AG04449 (cell line): ENCODE measurements at regions of chr12 and their contacts with region 1.

Region 1: DNA sequence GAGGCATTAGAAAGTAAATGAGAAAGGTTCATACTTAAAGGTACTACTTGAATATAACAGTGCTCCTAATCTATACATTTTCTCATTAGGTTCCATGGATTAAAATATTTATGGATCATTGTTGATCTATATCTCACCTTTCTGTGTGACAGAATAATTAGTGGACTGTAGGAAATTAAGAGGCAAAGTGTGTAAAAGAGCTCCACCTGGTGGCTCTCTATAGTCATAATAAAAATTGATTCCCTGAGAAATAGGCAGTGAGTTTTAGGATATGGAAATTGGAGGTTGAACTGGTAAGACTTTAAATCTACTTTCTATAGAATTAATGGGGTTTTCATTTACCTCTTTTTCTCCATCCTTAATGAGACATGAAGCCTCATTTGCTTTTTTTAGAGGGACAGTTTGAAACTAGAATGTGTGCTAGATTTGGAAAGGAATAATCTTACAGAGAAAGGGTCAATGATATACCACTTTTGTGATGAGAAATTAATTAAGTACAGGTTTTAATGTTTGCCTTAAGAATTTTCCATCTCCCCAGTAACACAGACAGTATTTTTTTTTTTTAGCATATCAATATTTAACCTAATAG is 11.8 kb upstream of the DERA start:
- DNase-seq: no peak
- H3K4me3 ChIP-seq: no peak overlapping the region
- CTCF ChIP-seq: peak; percentile 33

Region 2: GRCh38 chr12:15669256-15669948 is 230.0 kb before region 1 on chr12:
- CTCF ChIA-PET with region 1: no interaction called
- POLR2A ChIA-PET with region 1: no interaction called
- DNase-seq: no peak
- H3K4me3 ChIP-seq: no peak overlapping the region
- CTCF ChIP-seq: no peak

Region 3: DNA sequence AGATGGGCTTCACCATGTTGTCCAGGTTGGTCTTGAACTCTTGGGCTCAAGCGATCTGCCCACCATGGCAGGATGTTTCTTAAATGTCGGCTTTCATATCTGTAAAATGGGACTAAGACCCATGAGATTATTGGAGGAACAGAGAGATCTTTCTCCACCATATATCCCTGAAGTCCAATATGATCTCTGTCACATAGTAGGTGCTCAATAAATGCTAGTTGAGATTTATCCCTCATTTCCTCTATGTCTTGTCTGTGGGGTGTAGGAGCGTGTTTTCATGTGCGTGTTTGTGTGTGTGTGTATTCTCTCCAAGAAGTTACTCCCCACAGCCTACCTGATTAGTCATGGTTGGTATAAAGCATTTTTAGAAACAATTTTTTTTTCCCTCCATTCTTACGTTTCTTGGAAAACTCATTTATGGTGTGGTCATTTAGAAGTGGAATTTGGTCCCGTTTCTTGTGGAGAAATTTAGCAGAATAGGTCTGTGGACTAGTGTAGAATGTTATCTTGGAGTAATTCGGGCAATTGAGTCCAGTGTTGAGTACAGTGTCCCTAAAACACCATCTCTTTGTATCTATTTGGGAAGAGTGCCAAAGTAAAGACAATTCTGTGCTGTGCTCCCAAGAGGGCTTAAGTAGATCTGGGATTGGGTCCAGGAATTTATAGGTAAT is 12.9 kb before region 1 on chr12:
- CTCF ChIA-PET with region 1: interaction called, 61 read pairs
- POLR2A ChIA-PET with region 1: no interaction called
- DNase-seq: no peak
- H3K4me3 ChIP-seq: no peak overlapping the region
- CTCF ChIP-seq: no peak

Region 4: GRCh38 chr12:15910864-15911721 is 11.7 kb after region 1 on chr12 and contains the start of gene DERA:
- CTCF ChIA-PET with region 1: interaction called, 59 read pairs
- POLR2A ChIA-PET with region 1: interaction called, 4 read pairs
- DNase-seq: no peak
- H3K4me3 ChIP-seq: peak within 1 kb of the TSS; percentile 74
- CTCF ChIP-seq: no peak